Body of pancreas (tissue), 4 donors: ENCODE measurements at regions of chr22 and their contacts with region 1.

Region 1: DNA sequence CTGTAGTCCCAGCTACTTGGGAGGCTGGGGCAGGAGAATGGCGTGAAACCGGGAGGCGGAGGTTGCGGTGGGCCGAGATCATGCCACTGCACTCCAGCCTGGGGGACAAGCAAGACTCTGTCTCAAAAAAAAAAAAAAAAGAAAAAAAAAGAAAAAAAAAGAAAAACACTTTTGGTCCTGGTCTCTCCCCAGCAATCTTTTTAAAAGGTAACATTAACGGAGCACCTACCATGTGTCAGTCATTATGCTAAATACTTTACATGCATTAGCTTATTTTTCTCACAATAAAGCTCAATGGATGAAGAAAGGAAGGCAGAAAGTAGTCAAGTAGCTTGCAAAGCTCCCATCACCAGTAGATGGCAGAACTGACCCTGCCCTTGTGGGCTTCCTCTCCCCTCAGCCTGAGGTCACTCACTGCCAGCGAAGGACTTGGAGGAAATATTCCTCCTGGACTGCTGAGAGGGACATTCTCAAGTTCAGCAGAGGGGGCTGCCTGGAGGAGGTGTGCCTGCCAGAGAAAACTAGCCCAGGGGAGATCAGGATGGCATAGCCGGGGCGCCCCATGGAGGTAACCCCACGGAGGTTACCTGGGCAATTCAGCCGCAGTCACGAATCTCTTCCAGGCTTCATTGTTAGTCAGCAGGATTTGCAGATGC is 15.5 kb downstream of the APOL3 start:
- DNase-seq: peak; percentile 55 to 77 (median 66)
- ATAC-seq: peak; percentile 80
- H3K4me3 ChIP-seq: no peak overlapping the region
- H3K27ac ChIP-seq: no peak overlapping the region
- H3K4me1 ChIP-seq: no peaks in the 10 kb centered on the region
- H3K27me3 ChIP-seq: no peaks in the 10 kb centered on the region
- CTCF ChIP-seq: peak; percentile 51 to 88 (median 74)
- POLR2A ChIP-seq: no peak

Region 2: DNA sequence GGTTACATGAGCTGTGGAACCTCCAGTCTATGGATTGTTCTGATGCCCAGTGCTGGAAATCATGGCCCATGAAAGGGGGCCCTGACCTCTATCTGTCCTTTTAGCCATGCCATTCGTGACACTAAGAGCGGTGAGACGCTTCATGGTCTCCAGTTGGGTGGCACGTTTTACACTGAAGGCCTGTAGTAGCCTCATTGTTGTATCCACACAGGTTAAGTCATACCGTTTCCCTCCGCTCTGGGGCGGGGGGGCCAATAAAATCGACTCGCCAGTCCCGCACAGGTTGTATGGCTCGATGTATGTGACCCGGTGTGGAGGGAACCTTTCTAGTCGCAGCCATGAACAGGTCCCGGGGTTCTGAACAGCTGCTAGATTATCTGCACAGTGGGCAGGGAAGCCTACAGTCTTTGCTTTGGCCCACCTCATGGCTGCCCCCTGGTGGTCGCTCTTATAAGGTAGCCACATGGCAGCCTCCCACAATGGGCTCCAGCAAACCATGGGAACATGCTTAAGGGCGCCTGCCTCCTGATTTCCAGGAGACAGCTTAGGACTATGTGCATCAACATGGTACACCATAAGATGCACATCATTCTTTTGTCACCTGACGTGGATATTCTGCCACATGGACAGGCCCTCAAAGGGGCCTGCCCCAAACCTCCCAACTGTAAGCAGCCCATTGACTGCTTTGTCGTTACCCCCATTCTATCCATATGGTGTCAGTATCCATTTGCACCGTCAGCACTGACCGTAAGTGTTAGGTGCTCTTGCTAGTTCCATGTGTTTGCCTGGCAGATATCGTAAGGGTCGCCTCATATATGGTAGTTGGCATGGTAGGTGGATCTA is 35.2 kb after region 1 on chr22:
- intact Hi-C with region 1: loop called (anchors 5 kb)
- DNase-seq: peak; percentile 85 to 92 (median 88)
- ATAC-seq: peak; percentile 97
- H3K4me3 ChIP-seq: no peak overlapping the region
- H3K27ac ChIP-seq: no peak overlapping the region
- H3K4me1 ChIP-seq: no peaks in the 10 kb centered on the region
- H3K27me3 ChIP-seq: no peaks in the 10 kb centered on the region
- CTCF ChIP-seq: peak; percentile 74 to 89 (median 78)
- POLR2A ChIP-seq: no peak

Region 3: DNA sequence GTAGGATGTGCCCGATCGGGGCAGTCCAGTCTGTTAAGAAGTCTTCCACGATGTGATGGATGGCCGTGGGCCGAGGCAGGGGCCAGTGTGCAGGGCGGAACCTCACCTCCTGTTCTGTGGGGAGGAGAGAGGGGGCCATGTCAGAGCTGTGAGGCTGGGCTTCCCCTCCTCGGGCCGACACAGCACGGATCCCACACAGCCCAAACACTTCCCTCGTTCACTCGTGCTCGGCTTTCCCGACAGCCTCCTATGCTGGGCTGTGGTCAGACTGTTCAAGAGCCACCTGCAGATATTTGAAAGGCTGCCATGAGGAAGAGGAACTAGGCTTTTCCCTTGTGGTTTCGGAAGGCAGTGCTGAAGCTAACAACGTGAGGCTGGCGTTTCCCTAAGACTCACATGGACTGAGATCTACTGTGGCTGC is 348.7 kb after region 1 on chr22:
- intact Hi-C with region 1: no loop called
- DNase-seq: peak in 1 of 4 donors; percentile 64
- ATAC-seq: no peak
- H3K4me3 ChIP-seq: no peak overlapping the region
- H3K27ac ChIP-seq: no peak overlapping the region
- H3K4me1 ChIP-seq: no peaks in the 10 kb centered on the region
- H3K27me3 ChIP-seq: no peaks in the 10 kb centered on the region
- CTCF ChIP-seq: no peak
- POLR2A ChIP-seq: no peak